Naive thymus-derived CD4-positive, alpha-beta T cell (primary cell): ENCODE measurements at regions of chr2 and their contacts with region 1.

Region 1: GRCh38 chr2:191935247-191935646 is 88.4 kb upstream of the CAVIN2 start:
- DNase-seq: no peak
- ATAC-seq: no peak
- H3K4me3 ChIP-seq: no peak overlapping the region
- H3K4me3 Mint-ChIP-seq: no peak overlapping the region
- H3K27ac ChIP-seq: no peak overlapping the region
- H3K27ac Mint-ChIP-seq: no peak overlapping the region
- H3K4me1 ChIP-seq: no peaks in the 10 kb centered on the region
- H3K4me1 Mint-ChIP-seq: peaks cover 0 to 1% (median 0%) of the 10 kb centered on the region in 7 donors
- H3K27me3 ChIP-seq: no peaks in the 10 kb centered on the region
- H3K27me3 Mint-ChIP-seq: peaks cover 14 to 24% (median 22%) of the 10 kb centered on the region in 5 donors

Region 2: DNA sequence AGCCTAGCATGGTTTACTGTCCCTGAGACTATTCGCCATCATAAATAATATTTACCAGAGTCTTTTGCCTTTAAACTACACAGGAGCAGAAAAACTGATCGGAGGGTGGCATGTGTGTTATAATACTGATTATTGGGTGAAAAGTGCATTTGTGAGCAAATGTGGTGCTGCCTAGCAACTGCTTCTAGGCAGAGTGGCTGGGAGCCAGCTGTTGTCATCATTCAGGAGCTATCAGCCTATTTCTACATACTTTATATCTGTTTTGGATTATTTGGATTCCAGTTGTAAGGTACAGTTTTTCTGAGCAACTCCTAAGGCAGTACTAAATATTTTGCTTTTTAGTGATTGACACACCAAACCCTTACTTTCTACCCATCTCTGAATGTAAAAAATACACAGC is 1797.7 kb before region 1 on chr2:
- CTCF ChIA-PET with region 1: no interaction called
- POLR2A ChIA-PET with region 1: no interaction called
- intact Hi-C with region 1: loop called in 1 of 2 experiments (anchors 5 kb)
- DNase-seq: no peak
- ATAC-seq: no peak
- H3K4me3 ChIP-seq: no peak overlapping the region
- H3K4me3 Mint-ChIP-seq: no peak overlapping the region
- H3K27ac ChIP-seq: no peak overlapping the region
- H3K27ac Mint-ChIP-seq: no peak overlapping the region
- H3K4me1 ChIP-seq: no peaks in the 10 kb centered on the region
- H3K4me1 Mint-ChIP-seq: no peaks in the 10 kb centered on the region
- H3K27me3 ChIP-seq: no peaks in the 10 kb centered on the region
- H3K27me3 Mint-ChIP-seq: peaks cover 0 to 4% (median 0%) of the 10 kb centered on the region in 5 donors

Region 3: DNA sequence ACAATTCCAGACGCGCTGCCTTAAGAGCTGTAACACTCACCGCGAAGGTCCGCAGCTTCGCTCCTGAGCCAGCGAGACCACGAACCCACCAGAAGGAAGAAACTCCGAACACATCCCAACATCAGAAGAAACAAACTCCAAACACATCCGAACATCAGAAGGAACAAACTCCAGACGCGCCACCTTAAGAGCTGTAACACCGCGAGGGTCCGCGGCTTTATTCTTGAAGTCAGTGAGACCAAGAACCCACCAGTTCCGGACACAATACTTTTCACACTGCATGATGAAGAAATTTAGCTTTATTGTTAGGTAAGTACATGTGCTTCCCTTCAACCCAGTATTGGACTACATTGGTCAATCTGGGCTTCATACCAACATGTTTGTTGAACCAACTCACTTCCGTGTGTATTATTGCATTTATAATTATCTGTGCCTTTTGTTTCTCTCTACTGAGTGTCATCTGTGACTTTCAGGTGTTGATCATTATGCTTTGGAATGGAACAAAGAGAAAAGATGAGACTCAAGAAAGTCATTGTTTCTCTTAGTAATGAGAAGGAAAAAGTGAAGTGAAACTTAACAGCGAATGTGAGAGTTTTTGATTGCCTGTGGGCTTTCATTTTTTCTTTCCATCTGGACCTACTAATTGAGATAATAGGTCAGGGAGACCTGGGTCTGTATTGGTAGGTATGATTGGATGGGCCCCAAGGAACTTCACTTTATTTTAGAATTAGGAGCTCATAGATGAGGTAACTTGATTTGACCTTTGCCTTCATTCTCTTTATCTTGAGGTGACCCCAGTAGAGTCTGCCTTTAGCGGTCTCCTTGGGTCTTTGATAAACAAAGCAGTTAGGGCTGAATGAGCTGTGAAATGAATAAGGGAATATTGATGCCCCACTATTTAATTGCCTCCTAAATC is 12.3 kb before region 1 on chr2:
- CTCF ChIA-PET with region 1: no interaction called
- POLR2A ChIA-PET with region 1: no interaction called
- intact Hi-C with region 1: no loop called
- DNase-seq: no peak
- ATAC-seq: no peak
- H3K4me3 ChIP-seq: no peak overlapping the region
- H3K4me3 Mint-ChIP-seq: no peak overlapping the region
- H3K27ac ChIP-seq: no peak overlapping the region
- H3K27ac Mint-ChIP-seq: no peak overlapping the region
- H3K4me1 ChIP-seq: no peaks in the 10 kb centered on the region
- H3K4me1 Mint-ChIP-seq: no peaks in the 10 kb centered on the region
- H3K27me3 ChIP-seq: no peaks in the 10 kb centered on the region
- H3K27me3 Mint-ChIP-seq: peaks cover 0 to 13% (median 7%) of the 10 kb centered on the region in 5 donors

Region 4: GRCh38 chr2:191950132-191950874 is 15.1 kb after region 1 on chr2:
- CTCF ChIA-PET with region 1: no interaction called
- POLR2A ChIA-PET with region 1: no interaction called
- intact Hi-C with region 1: no loop called
- DNase-seq: no peak
- ATAC-seq: no peak
- H3K4me3 ChIP-seq: no peak overlapping the region
- H3K4me3 Mint-ChIP-seq: no peak overlapping the region
- H3K27ac ChIP-seq: no peak overlapping the region
- H3K27ac Mint-ChIP-seq: no peak overlapping the region
- H3K4me1 ChIP-seq: no peaks in the 10 kb centered on the region
- H3K4me1 Mint-ChIP-seq: no peaks in the 10 kb centered on the region
- H3K27me3 ChIP-seq: peaks cover 0 to 3% of the 10 kb centered on the region in 2 donors
- H3K27me3 Mint-ChIP-seq: peaks cover 0 to 15% (median 10%) of the 10 kb centered on the region in 5 donors

Region 5: DNA sequence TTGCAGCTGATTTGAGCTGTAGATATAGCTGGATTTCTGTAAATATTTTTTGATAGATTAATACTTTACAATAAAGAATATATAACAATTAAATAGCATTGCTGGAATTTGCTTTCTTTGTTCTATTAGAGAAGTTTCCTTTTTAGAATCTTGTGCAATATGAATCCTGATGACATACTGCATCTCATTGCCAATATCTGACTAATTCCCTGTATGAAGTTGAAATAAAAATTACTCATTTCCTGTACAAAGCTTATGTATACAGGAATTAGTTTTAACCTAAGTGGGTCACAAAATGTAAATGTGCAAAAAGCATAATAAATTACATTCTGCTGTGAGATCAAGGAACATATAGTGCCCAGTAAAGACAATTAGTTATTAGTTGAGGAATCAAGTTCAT is 332.2 kb after region 1 on chr2:
- CTCF ChIA-PET with region 1: no interaction called
- POLR2A ChIA-PET with region 1: no interaction called
- intact Hi-C with region 1: no loop called
- DNase-seq: no peak
- ATAC-seq: no peak
- H3K4me3 ChIP-seq: no peak overlapping the region
- H3K4me3 Mint-ChIP-seq: no peak overlapping the region
- H3K27ac ChIP-seq: no peak overlapping the region
- H3K27ac Mint-ChIP-seq: no peak overlapping the region
- H3K4me1 ChIP-seq: no peaks in the 10 kb centered on the region
- H3K4me1 Mint-ChIP-seq: no peaks in the 10 kb centered on the region
- H3K27me3 ChIP-seq: no peaks in the 10 kb centered on the region
- H3K27me3 Mint-ChIP-seq: no peaks in the 10 kb centered on the region